Gastrocnemius medialis (tissue), 4 donors: ENCODE measurements at regions of chr10 and their contacts with region 1.

Region 1: DNA sequence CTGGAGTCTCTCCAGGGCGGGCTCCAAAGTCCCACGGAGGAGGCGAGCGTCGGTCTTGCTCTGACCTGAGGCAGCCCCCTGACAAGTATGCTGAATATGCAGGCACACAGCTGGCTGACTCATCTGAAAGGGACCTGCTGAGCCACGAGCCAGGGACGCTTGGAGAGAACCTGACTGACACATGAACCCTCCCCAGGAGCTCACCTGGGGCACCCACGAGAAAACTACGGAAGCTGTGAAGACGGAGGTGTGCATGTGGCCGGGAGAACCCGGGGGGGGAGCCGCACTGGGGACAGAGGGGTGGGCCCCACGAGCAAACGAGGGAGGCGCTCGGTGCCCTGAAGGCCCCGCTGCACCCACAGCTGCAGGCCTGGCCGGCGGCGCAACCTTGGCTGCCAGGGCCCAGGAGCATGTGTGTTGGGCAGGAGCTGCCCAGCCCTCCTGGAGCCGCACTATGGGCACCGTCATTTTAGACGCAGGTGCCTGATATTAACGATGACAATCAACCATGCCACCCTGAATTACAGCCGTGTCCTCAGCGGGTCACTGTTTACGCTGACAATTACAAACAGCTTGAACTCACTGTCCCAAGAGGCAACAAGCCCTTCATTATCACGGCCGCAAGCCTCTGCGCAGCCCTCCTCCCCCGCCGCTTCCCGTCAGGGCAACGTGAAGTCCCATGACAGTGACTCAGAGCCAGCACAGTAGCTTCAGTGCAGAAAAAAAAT is 64.7 kb downstream of the DIP2C start:
- DNase-seq: peak; percentile 85 to 90
- ATAC-seq: peak; percentile 78 to 88
- H3K4me3 ChIP-seq: peak overlapping the region; percentile 22 to 54 (median 46)
- H3K27ac ChIP-seq: peak overlapping the region; percentile 87 to 92 (median 88)
- H3K4me1 ChIP-seq: peaks cover 51 to 53% of the 10 kb centered on the region in 2 donors
- H3K27me3 ChIP-seq: no peaks in the 10 kb centered on the region
- CTCF ChIP-seq: no peak
- POLR2A ChIP-seq: peak; percentile 35 to 38

Region 2: DNA sequence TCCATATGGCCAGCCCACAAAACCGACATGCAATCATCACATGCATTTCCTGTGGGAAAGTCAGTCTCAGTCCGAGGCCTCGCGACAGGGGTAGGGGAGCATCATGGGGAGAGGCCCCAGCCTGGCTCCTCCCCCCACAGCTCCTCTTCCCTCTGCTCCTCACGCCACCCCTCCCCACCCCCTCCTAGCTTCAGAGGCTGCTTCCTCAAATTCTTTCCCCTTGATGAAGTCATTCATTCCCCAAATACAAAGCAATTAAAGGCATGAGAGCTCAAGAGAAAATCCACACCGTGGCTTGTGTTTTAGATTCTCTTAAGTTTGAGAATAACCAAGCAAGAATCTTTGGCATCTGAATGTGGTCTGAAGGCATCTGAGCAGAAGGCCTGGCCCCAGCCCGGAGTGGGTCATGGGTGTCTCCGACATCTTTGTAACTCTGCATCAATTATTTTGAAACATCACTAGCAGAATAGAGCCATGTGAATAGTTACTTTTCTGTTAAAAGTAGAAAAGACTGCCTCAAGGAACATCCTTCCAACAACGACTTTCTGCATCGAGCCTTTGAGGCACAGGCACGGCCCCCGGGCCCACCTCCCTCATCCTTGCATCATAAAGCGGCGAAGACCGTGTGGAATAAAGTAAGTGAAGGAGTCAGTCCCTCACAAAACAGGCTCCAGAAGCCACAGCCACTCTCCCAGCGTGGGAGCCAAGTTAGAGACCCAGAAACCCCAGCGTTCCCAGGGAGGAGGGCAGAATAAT is 26.2 kb before region 1 on chr10:
- in situ Hi-C with region 1: no loop called
- intact Hi-C with region 1: no loop called
- DNase-seq: no peak
- ATAC-seq: no peak
- H3K4me3 ChIP-seq: no peak overlapping the region
- H3K27ac ChIP-seq: no peak overlapping the region
- H3K4me1 ChIP-seq: peaks cover 9 to 23% of the 10 kb centered on the region in 2 donors
- H3K27me3 ChIP-seq: no peaks in the 10 kb centered on the region
- CTCF ChIP-seq: no peak
- POLR2A ChIP-seq: no peak

Region 3: GRCh38 chr10:659688-660141 is 34.9 kb after region 1 on chr10:
- in situ Hi-C with region 1: no loop called
- intact Hi-C with region 1: loop called (anchors 2 kb)
- DNase-seq: no peak
- ATAC-seq: no peak
- H3K4me3 ChIP-seq: peak overlapping the region in 1 of 4 donors; percentile 3
- H3K27ac ChIP-seq: peak overlapping the region; percentile 80 to 92 (median 90)
- H3K4me1 ChIP-seq: peaks cover 55 to 60% of the 10 kb centered on the region in 2 donors
- H3K27me3 ChIP-seq: no peaks in the 10 kb centered on the region
- CTCF ChIP-seq: no peak
- POLR2A ChIP-seq: no peak

Region 4: DNA sequence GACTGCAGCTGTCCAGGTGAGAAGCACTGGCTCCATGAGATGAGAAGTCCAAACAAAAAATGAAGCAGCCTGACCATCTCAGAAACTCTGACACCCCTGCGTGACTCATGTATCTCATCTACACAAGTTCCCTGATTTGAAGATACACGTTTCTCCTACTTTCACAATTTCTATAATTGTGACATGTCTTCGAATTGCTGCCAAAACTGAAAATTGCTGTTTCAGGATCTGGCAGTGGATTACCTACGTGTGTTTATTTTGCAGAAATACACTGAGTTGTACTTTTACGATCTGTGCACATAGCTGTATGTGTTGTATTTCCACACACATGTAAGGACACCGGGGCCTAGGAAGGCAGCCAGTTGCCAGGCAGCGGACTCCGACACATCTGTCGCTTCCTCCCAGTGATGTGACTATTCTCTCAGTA is 253.6 kb after region 1 on chr10:
- in situ Hi-C with region 1: no loop called
- intact Hi-C with region 1: loop called (anchors 10 kb)
- DNase-seq: peak; percentile 72 to 87
- ATAC-seq: peak; percentile 89 to 94
- H3K4me3 ChIP-seq: no peak overlapping the region
- H3K27ac ChIP-seq: peak overlapping the region; percentile 62 to 81 (median 73)
- H3K4me1 ChIP-seq: peaks cover 37 to 43% of the 10 kb centered on the region in 2 donors
- H3K27me3 ChIP-seq: no peaks in the 10 kb centered on the region
- CTCF ChIP-seq: no peak
- POLR2A ChIP-seq: no peak